ENCODE measurements at regions of chr1 and their contacts with region 1.

Region 1: DNA sequence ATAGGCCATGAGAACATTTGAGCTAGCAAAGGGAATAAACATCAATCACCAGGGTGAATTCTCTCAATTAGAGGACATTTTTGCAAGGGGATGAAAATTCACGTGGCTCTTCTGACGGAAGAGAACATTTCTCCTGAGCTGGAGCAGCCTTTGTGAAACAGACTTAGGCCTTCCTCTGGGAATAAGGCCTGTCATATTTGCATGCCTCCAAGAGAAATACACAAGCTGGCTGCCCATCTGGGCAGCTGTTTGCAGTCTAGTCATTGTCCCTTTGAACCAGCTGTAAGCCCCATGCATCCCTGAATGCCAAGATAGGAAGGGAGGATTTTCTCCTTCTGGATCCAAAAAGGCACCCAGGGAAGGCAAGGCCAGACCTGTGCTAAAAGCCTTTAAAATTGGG is 5.5 kb downstream of the LEMD1 start:
- DNase-seq: no peak
- H3K4me3 Mint-ChIP-seq: no peak overlapping the region
- H3K27ac Mint-ChIP-seq: no peak overlapping the region
- H3K4me1 Mint-ChIP-seq: no peaks in the 10 kb centered on the region
- H3K27me3 Mint-ChIP-seq: peaks cover 40% of the 10 kb centered on the region
- CTCF ChIP-seq: no peak

Region 2: DNA sequence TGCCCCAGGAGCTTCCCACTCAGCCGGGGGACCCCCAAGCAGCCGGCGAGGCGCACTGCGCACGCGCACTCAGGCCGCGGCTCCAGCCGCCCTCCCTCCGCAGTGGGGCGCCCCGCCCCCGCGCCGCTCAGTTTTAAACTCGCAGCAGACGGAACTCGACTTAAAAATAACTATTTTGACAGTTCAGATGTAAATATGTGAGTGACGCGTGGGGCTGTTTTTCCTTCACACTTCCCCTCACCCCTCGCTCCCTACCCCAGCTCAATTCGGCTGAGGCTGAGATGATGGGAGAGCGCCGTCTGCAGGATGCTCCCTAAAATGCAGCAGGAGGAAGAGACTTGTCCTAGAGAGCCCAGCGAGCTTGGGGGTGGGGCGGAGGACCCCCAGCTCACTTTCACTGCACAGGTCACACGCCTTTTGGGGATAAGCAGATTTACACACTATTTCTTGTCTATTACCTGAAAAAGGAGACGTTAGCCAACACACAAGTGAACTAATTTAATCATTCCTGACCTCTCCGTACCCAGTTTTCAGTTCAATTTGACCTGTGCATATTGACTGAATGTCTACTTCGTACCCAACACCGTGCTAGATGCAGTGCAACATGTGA is 14.5 kb after region 1 on chr1:
- CTCF ChIA-PET with region 1: interaction called, 21 read pairs
- POLR2A ChIA-PET with region 1: interaction called, 3 read pairs
- intact Hi-C with region 1: no loop called
- DNase-seq: peak; percentile 50
- H3K4me3 Mint-ChIP-seq: peak overlapping the region; percentile 56
- H3K27ac Mint-ChIP-seq: no peak overlapping the region
- H3K4me1 Mint-ChIP-seq: no peaks in the 10 kb centered on the region
- H3K27me3 Mint-ChIP-seq: peaks cover 56% of the 10 kb centered on the region
- CTCF ChIP-seq: peak; percentile 89

Measured in MCF 10A (cell line).